Activated CD4-positive, alpha-beta memory T cell treated with anti-CD3 and anti-CD28 coated beads, Interleukin-2, amount 10 ng/mL, durations not matched to agents 7 days and 5 days (primary cell): ENCODE measurements at regions of chr14 and their contacts with region 1.

Region 1: GRCh38 chr14:30270200-30271161 is 288.5 kb upstream of the G2E3 start:
- DNase-seq: peak; percentile 62
- H3K4me3 Mint-ChIP-seq: no peak overlapping the region
- H3K27ac Mint-ChIP-seq: no peak overlapping the region
- H3K4me1 Mint-ChIP-seq: no peaks in the 10 kb centered on the region
- H3K27me3 Mint-ChIP-seq: peaks cover 1% of the 10 kb centered on the region

Region 2: GRCh38 chr14:30165255-30165654 is 105.2 kb before region 1 on chr14:
- CTCF ChIA-PET with region 1: no interaction called
- POLR2A ChIA-PET with region 1: no interaction called
- DNase-seq: no peak
- H3K4me3 Mint-ChIP-seq: no peak overlapping the region
- H3K27ac Mint-ChIP-seq: no peak overlapping the region
- H3K4me1 Mint-ChIP-seq: no peaks in the 10 kb centered on the region
- H3K27me3 Mint-ChIP-seq: no peaks in the 10 kb centered on the region

Region 3: DNA sequence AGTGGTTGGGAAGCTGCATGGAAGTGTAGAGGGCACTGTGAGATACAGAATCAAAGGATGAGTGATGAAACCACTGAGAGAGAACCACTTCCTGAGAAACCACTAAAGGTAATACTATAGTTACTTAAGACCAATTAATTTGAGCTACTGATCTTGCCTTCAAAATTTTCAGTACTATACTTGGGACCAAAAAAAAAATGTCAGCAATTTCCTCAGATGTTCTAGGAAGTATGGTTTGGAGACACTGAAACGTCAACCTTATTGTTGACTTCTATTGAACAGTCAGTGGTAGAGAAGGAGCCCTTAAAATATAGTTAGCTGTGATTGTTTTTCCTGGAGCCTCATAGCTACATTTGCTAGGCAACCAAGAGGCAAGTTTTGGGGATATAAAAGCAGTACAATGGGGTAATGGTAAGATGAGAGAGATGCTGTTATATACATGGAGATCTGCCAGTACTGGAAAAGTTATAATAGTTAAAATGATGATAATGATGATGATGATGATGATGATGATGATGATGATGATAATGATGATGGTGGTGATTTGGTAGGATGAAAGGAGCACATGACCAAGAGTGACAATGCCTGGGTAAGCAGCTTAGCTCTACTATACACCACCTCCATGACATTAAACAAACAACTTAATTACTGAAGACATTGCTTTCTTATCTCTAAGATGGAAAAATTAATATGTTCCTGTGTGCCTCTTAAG is 12.4 kb before region 1 on chr14:
- CTCF ChIA-PET with region 1: interaction called, 13 read pairs
- POLR2A ChIA-PET with region 1: no interaction called
- DNase-seq: no peak
- H3K4me3 Mint-ChIP-seq: no peak overlapping the region
- H3K27ac Mint-ChIP-seq: no peak overlapping the region
- H3K4me1 Mint-ChIP-seq: no peaks in the 10 kb centered on the region
- H3K27me3 Mint-ChIP-seq: no peaks in the 10 kb centered on the region

Region 4: DNA sequence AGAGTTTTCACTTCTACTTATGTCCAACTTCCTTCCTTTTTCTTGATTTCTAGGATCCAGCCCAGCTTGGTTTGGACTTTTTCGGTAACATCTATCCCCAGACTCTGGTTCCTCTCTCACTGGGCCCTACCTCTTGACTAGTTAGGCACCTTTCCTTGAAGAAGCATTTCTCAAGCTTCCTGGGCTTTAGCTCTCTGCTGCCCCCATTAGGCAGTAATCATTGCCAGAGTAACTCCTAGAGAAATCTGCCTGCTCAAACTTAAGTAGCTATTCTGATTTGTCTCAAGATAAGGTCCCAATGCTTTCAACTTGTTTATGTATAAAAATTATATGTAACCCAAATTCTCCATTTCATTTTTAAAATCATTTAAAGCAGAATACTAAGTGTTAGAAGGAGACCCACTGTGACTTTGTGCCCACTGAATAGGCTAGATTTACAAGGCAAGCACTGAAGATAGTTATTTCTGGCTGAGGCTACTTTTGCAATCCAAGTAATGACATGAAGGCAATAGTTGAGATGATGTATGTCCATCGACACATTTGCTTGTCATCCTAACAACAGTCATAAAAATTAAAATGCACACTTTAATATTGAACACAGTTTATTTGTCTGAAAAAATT is 13.5 kb after region 1 on chr14:
- CTCF ChIA-PET with region 1: interaction called, 37 read pairs
- POLR2A ChIA-PET with region 1: no interaction called
- DNase-seq: no peak
- H3K4me3 Mint-ChIP-seq: no peak overlapping the region
- H3K27ac Mint-ChIP-seq: no peak overlapping the region
- H3K4me1 Mint-ChIP-seq: no peaks in the 10 kb centered on the region
- H3K27me3 Mint-ChIP-seq: no peaks in the 10 kb centered on the region

Region 5: GRCh38 chr14:30426463-30426862 is 156.0 kb after region 1 on chr14:
- CTCF ChIA-PET with region 1: no interaction called
- POLR2A ChIA-PET with region 1: no interaction called
- DNase-seq: no peak
- H3K4me3 Mint-ChIP-seq: no peak overlapping the region
- H3K27ac Mint-ChIP-seq: no peak overlapping the region
- H3K4me1 Mint-ChIP-seq: no peaks in the 10 kb centered on the region
- H3K27me3 Mint-ChIP-seq: peaks cover 20% of the 10 kb centered on the region